ENCODE measurements at regions of chr7 and their contacts with region 1.

Region 1: DNA sequence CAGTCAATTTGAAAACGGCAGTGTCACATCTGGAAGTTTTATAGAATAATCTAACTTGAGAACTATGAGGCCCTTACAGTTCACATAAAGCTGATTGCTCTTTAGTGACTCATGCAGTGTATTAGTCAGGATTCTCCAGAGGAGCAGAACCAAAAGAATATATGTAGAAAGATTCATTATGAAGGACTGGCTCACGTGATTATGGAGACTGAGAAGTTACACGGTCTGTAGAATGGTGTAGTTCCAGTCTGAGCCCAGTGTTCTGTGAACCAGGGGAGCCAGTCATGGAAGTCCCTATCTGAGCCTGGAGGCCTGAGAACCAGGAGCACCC is 21.5 kb downstream of the RBM33 start:
- DNase-seq: peak; percentile 77
- H3K4me3 Mint-ChIP-seq: peak overlapping the region; percentile 21
- H3K27ac Mint-ChIP-seq: peak overlapping the region; percentile 82
- H3K4me1 Mint-ChIP-seq: peaks cover 24% of the 10 kb centered on the region
- H3K27me3 Mint-ChIP-seq: no peaks in the 10 kb centered on the region
- CTCF ChIP-seq: no peak

Region 2: DNA sequence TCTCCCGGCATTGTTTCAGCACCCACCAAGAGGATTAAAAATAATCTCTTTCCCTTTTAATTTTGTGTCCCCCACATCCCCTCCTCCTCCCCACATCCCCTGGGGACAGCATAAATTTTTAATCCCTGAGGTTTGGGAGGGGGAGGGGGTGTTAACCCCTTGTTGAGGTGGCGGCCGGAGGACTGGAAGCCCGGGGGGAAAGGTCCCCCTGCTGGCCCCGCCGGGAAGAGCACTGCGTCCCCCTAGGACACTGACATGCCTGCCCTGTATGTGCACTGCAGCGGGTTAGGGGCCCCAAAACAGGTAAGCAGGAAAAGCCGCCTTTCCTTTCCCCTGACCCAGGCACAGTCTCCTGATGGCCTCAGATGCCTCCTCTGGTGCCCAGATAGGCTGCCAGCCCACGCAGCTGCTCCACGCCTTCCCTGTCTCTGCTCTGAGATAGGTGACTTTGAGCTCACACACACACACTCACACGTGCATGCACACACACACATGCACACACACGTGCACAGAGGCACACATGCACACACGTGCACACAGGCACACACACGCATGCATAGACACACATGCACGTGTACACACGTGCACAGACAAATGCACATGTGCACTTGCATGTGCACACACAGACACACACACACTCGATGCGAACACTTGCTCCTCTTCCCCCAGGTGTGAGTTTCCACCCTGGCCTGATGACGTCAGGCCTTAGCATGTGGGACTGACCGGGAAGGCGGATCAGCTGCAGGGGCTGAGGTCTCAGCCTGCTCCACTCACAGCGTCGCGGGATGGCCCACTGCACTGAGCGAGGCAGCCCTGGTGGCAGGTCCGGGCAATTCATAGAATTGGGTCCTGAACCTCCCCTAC is 131.9 kb before region 1 on chr7:
- CTCF ChIA-PET with region 1: no interaction called
- POLR2A ChIA-PET with region 1: no interaction called
- intact Hi-C with region 1: no loop called
- DNase-seq: no peak
- H3K4me3 Mint-ChIP-seq: no peak overlapping the region
- H3K27ac Mint-ChIP-seq: no peak overlapping the region
- H3K4me1 Mint-ChIP-seq: no peaks in the 10 kb centered on the region
- H3K27me3 Mint-ChIP-seq: peaks cover 74% of the 10 kb centered on the region
- CTCF ChIP-seq: no peak

Region 3: DNA sequence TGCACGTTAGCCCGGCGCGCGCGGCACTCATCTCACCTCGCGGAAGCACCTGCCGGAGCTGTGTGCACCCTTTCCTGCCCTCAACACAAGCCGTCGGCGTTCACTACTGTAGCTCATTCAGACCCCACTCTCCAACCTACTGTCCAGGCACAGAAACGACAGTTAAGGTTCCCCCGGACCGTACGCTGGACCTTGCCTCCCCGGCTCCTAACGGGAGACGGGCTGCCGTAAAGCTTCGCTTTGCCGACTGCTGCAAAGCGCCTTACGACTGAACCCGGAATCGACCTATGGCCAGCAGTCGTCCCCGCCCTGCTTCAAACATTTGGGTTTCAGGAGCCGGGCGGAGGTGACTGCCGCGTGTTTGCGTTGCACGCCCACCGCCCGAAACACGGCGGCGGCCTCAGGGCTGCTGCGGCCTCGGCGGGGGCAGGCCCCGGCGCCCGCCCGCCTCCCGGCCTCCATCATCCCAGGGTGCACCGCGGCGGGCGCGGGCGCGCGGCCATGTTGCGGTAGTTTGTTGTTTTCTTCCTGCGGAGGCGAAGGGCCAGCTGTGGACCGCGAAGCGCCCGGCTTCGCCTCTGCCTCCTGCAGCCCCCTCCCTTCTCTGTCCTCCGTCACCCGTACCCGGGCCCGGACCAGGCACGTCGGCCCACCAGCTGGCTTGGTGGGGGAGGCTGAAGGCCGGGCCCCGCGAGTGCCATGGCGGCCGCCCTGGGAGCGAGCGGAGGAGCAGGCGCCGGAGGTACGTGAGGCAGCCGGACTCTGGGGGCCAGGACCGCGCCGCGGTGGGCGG is 21.5 kb before region 1 on chr7 and contains the start of gene RBM33:
- CTCF ChIA-PET with region 1: no interaction called
- POLR2A ChIA-PET with region 1: interaction called, 15 read pairs
- intact Hi-C with region 1: loop called (anchors 2 kb)
- DNase-seq: peak; percentile 81
- H3K4me3 Mint-ChIP-seq: peak within 1 kb of the TSS; percentile 78
- H3K27ac Mint-ChIP-seq: peak within 1 kb of the TSS; percentile 93
- H3K4me1 Mint-ChIP-seq: peaks cover 20% of the 10 kb centered on the region
- H3K27me3 Mint-ChIP-seq: no peaks in the 10 kb centered on the region
- CTCF ChIP-seq: no peak
- total RNA-seq, gene RBM33: 80.5 and 81.9 TPM in 2 replicates

Region 4: DNA sequence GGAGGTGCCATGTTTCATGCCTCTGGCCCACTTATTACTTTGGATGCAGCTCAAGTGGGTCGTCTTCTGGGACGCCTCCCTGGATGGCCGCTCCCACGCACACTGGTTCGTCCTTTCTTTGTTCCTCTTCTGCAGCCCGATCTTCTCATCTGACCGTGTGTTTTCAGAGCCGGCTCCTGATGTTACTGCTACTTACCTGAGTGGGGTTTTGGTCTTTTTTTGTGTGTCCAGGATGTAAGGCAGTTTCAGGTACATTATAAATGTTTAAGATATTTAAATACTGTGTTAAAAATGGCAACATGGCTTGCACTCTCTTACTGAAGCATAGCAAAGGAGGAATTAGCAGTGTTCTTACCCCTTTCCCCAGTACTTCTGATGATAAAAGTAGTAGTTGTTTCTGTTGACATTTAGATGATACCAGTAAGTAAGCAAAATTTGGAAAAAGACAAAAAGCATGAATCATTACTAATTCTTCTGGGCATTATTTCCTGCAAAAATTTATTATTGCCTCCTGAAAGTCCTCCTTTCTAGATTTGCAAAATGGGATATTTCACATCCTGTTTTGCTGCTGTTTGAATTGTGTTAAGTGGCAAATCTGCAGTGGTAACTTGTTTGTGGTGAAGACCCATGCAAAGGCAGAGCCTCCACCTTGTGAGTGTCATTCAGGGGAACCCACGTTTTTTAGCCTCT is 87.0 kb after region 1 on chr7:
- CTCF ChIA-PET with region 1: no interaction called
- POLR2A ChIA-PET with region 1: no interaction called
- intact Hi-C with region 1: no loop called
- DNase-seq: no peak
- H3K4me3 Mint-ChIP-seq: no peak overlapping the region
- H3K27ac Mint-ChIP-seq: no peak overlapping the region
- H3K4me1 Mint-ChIP-seq: peaks cover 23% of the 10 kb centered on the region
- H3K27me3 Mint-ChIP-seq: no peaks in the 10 kb centered on the region
- CTCF ChIP-seq: no peak